Right ventricle myocardium inferior (tissue), 1 donor: ENCODE measurements at regions of chr1 and their contacts with region 1.

Region 1: DNA sequence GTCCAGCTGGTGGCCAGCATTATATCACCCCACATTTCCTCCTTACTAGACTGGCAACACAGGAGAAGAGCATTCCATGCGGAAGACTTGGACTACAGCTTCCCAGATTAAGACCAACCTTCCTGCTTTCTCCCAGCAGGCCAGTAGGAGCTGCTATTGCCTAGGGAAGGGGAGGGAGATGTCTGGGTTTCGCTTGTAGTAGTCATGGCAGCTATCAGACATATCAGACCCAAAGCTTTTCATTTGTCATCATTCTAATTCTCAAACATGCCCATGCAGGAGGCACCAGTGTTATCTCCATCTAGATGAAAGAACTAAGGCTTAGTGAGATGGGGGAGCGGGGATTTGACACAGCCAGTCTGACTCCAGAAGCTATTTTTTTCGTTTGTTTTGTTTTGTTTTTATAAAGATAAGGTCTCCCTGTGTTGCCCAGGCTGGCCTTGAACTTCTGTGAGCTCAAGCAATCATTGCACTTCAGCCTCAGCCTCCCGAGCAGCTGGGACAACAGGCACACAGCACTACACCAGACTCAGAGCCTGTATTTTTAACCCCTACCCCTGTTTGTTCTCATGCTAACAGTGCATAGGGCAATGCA is 4.5 kb downstream of the PLA2G2A start:
- DNase-seq: no peak
- ATAC-seq: peak; percentile 82

Region 2: GRCh38 chr1:20029178-20029912 is 54.4 kb after region 1 on chr1:
- intact Hi-C with region 1: loop called (anchors 5 kb)
- DNase-seq: peak; percentile 77
- ATAC-seq: peak; percentile 62

Region 3: GRCh38 chr1:20069874-20070273 is 95.0 kb after region 1 on chr1 and contains the start of gene PLA2G5:
- intact Hi-C with region 1: loop called (anchors 10 kb)
- DNase-seq: peak; percentile 86
- ATAC-seq: peak; percentile 91
- total RNA-seq, gene PLA2G5: 65.6 TPM

Region 4: DNA sequence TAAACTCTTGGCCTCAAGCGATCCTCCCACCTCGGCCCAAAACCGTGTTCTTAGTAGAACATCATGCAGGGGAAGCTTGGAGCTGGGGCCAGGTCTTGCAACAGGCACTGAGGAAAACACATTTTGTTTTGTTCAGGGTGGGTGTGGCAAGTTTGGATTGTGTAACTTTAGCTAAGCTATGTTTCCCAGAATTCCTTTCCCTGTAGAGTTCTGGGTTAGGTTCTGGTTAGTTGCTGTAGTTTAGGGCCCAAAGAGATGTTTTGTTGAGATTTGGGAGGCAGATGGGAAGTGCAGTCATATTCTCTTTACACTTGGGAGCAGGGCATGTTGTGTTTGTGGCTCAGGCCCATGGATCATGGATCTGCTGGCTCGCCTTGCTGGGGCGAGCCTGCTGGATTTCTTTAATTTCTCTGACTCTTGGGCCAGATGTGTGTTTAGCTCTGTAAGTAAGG is 119.0 kb after region 1 on chr1:
- intact Hi-C with region 1: loop called (anchors 5 kb)
- DNase-seq: peak; percentile 86
- ATAC-seq: peak; percentile 82

Region 5: GRCh38 chr1:20126041-20126805 is 151.3 kb after region 1 on chr1:
- intact Hi-C with region 1: no loop called
- DNase-seq: no peak
- ATAC-seq: no peak

Region 6: DNA sequence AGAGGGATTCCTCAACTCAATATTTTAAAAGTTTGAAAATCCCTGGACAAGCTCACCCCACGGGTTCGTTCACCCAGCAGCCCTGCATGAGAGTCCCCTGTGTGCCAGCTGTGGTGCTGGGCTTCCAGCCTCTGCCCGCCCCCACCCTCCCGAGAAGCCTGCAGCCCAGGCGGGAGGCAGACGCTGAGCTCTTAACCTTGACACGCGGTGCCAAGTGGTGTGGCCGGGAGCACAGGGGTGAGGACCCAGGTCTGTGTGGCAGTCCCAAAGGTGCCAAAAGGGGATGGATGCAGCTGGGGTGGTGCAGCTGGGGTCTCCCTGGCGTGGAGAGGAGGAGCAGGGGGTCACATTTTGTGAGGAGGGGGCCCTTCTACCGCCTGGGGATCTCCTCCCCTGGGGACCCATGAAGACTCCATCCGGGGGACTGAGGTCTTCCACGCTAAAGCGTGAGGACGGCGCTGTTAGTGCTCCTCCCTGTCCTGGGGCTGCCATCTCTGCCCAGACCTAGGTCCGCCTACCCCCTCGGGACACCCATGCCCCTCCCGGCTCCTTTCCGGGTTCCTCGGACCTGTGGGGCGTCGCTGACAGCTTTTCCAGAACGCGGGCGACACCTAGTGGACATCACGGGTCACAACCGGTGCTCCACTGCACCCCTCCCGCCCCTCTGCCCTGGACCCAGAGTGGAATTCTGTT is 177.1 kb after region 1 on chr1:
- intact Hi-C with region 1: loop called (anchors 5 kb)
- DNase-seq: peak; percentile 92
- ATAC-seq: peak; percentile 92